ENCODE measurements at regions of chr7 and their contacts with region 1.

Region 1: DNA sequence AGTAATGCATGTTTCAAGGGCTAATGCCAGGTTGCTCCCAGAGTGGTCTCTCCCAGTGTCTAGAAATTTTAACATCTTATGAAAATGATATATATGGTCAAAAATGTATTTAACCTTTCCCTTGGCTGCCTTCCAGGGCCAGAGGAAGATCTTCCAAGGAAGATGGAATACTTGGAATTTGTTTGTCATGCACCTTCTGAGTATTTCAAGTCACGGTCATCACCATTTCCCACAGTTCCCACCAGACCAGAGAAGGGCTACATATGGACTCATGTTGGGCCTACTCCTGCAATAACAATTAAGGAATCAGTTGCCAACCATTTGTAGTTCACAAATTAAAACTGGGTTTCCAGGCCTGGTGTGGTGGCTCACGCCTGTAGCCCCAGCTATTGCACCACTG is 9.0 kb downstream of the GATAD1 start:
- DNase-seq: no peak
- ATAC-seq: no peak
- H3K4me3 ChIP-seq: no peak overlapping the region
- H3K27ac ChIP-seq: no peak overlapping the region
- H3K4me1 ChIP-seq: no peaks in the 10 kb centered on the region
- H3K27me3 ChIP-seq: no peaks in the 10 kb centered on the region
- CTCF ChIP-seq: no peak
- POLR2A ChIP-seq: no peak
- RAD21 ChIP-seq: no peak

Region 2: GRCh38 chr7:91940572-91941341 is 515.5 kb before region 1 on chr7 and contains the start of gene AKAP9:
- CTCF ChIA-PET with region 1: no interaction called
- POLR2A ChIA-PET with region 1: no interaction called
- RAD21 ChIA-PET with region 1: no interaction called
- intact Hi-C with region 1: loop called (anchors 5 kb)
- DNase-seq: peak; percentile 73
- ATAC-seq: peak; percentile 98
- H3K4me3 ChIP-seq: peak within 1 kb of the TSS; percentile 87 to 88
- H3K27ac ChIP-seq: peak within 1 kb of the TSS; percentile 61
- H3K4me1 ChIP-seq: peaks cover 0 to 18% of the 10 kb centered on the region in 2 experiments; a peak in 2 of 4 replicates
- H3K27me3 ChIP-seq: no peaks in the 10 kb centered on the region
- CTCF ChIP-seq: no peak
- POLR2A ChIP-seq: peak; percentile 88
- RAD21 ChIP-seq: peak; percentile 9; the same call in 1 of the 2 replicates
- total RNA-seq, gene AKAP9: 32.6 TPM